ENCODE measurements at regions of chr10 and their contacts with region 1.

Region 1: DNA sequence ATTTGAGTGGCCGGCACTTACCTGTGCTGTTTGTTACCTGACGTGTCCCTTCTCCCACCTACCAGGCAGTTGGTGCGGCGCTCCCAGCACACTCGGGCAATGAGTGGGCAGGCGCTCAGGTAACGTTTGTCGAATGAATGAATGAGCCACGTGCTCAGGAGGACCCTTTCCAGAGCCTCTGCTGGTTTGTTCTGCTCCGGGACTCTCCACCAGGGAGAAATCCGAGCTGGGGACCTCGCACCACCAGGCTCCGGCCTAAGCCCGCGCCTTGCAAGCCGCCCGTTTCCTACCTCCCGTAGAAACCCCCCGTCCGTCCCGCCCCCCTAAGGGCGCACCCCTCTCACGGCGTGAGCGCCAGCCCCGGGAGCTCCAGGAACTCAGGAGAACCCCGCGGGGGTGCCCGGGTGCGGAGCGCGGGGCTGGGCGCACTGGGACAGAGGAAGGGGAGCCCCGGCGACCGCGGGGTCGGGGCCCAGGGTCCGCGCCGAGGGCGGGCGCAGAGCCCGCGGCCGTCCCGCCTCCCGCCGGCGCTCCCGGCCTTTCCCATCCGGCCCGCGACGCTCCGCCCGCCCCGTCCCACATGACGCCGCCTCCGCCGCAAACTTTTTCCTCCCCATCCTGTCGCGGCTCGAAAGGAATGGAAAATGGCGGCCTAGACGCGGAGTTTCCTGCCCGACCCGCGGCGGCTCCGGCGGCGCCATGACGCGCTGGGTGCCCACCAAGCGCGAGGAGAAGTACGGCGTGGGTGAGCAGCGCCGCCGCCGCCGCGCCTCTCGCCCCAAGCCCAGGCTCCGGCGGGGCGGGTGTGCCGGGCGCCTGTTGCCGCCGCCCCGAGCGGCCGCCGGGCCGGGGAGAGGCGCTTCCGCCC is at the start of gene DOCK1:
- DNase-seq: peak; percentile 69
- ATAC-seq: peak; percentile 79
- H3K4me3 ChIP-seq: peak within 1 kb of the TSS; percentile 76
- H3K27ac ChIP-seq: 0 out of 2 replicates have a peak within 1 kb of the TSS, but pooled peaks have one; percentile 23
- H3K4me1 ChIP-seq: peaks cover 36% of the 10 kb centered on the region
- H3K27me3 ChIP-seq: no peaks in the 10 kb centered on the region
- CTCF ChIP-seq: no peak
- total RNA-seq, gene DOCK1: 34.3 and 34.6 TPM in 2 replicates

Region 2: GRCh38 chr10:126969310-126969709 is 64.3 kb after region 1 on chr10:
- CTCF ChIA-PET with region 1: no interaction called
- POLR2A ChIA-PET with region 1: no interaction called
- intact Hi-C with region 1: loop called (anchors 5 kb)
- DNase-seq: peak; percentile 56
- ATAC-seq: peak; percentile 79
- H3K4me3 ChIP-seq: no peak overlapping the region
- H3K27ac ChIP-seq: no peak overlapping the region
- H3K4me1 ChIP-seq: no peaks in the 10 kb centered on the region
- H3K27me3 ChIP-seq: no peaks in the 10 kb centered on the region
- CTCF ChIP-seq: peak; percentile 59

Region 3: GRCh38 chr10:127012769-127013152 is 107.7 kb after region 1 on chr10:
- CTCF ChIA-PET with region 1: no interaction called
- POLR2A ChIA-PET with region 1: no interaction called
- intact Hi-C with region 1: loop called (anchors 5 kb)
- DNase-seq: peak; percentile 74
- ATAC-seq: peak; percentile 82
- H3K4me3 ChIP-seq: no peak overlapping the region
- H3K27ac ChIP-seq: peak overlapping the region; percentile 60
- H3K4me1 ChIP-seq: peaks cover 26% of the 10 kb centered on the region
- H3K27me3 ChIP-seq: no peaks in the 10 kb centered on the region
- CTCF ChIP-seq: no peak

Measured in PC-3 (cell line).